K562 (cell line): ENCODE measurements at regions of chr11 and their contacts with region 1.

Region 1: DNA sequence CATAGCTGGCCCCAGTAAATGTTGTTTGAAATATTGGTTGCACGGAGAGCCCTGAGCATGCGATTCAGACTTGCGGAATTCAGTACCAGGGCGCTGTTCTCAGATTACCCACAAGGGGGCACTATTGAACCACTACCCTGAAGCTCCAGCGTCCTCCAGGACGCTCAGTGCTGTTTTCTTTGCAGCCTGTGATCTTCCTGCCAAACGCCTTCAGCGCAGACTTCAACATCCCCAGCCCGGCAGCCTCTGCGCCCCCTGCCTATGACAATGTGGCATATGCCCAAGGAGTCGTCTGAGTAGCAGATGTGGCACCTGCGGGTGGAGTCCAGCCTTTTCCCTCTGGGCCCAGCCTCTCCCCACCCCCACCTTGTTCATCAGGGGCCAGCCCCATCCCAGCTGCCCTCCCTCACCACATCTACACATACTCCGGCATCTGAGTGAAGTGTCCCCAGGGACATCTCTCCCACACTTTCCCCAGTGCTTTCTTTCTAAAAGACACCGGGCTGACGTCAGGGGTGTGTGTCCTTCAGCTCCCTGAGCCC is 9.6 kb upstream of the MS4A10 start:
- DNase-seq: peak; percentile 75 to 86 (median 78)
- ATAC-seq: peak; percentile 95
- H3K4me3 ChIP-seq: no peak overlapping the region
- H3K27ac ChIP-seq: no peak overlapping the region
- H3K4me1 ChIP-seq: peaks cover 0 to 10% of the 10 kb centered on the region in 2 experiments; a peak in 1 of 5 replicates
- H3K27me3 ChIP-seq: peaks cover 15 to 40% of the 10 kb centered on the region in 2 experiments; a peak in 4 of 5 replicates
- CTCF ChIP-seq: peak; percentile 87 to 94 (median 90)
- EP300 ChIP-seq: no peak
- POLR2A ChIP-seq: no peak
- RAD21 ChIP-seq: peak; percentile 83 to 86

Region 2: GRCh38 chr11:60887556-60887955 is 112.1 kb after region 1 on chr11:
- CTCF ChIA-PET with region 1: interaction called, 3 read pairs
- POLR2A ChIA-PET with region 1: interaction called, 4 read pairs
- in situ Hi-C with region 1: no loop called
- intact Hi-C with region 1: loop called (anchors 1 kb)
- DNase-seq: peak; percentile 66 to 75 (median 74)
- ATAC-seq: peak; percentile 89
- H3K4me3 ChIP-seq: no peak overlapping the region
- H3K27ac ChIP-seq: no peak overlapping the region
- H3K4me1 ChIP-seq: peaks cover 7 to 30% of the 10 kb centered on the region in 2 experiments
- H3K27me3 ChIP-seq: no peaks in the 10 kb centered on the region
- CTCF ChIP-seq: peak; percentile 85 to 96 (median 91)
- EP300 ChIP-seq: no peak
- POLR2A ChIP-seq: no peak
- RAD21 ChIP-seq: peak; percentile 93 to 98

Region 3: DNA sequence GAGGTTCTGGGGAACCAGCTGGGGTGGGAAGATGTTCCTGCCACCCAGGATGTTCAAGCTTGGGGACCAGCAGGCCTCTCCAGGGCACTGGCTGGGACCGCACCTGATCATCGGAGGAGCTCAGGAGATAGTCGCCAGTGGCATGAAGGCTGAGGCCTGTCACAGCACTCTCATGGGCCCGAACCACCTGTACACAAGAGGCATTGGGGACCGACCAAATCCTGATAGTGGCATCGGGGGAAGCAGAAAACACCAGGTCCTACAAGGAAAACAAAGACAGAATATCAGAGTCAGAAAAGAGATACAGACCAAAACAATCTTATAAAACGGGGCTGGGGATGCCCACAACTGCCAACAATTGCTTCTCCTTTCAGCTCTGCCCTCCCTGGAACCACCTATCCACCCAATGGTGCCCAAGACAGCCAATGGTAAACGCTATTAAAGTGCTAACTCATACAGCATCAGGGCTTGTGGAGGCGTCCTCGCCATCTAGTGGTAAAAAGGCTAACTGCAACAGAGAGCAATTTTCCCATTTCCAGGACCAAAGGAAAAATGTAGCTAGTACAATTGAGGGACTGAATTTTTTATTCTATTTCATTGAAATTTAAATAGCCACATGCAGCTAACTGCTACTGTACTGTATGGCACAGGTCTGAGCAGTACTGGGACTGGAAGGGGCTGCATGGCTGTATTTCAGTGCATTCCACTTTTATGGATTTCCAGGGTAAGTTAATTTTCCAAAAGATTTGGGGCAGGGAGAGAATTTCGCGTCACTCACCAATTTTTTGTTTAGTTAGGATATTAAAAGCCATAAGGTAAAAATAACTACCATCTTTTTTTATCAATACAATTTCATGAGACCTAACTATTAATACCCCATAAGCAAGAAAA is 123.8 kb after region 1 on chr11:
- CTCF ChIA-PET with region 1: interaction called, 4 read pairs
- POLR2A ChIA-PET with region 1: no interaction called
- in situ Hi-C with region 1: loop called (anchors 5 kb)
- intact Hi-C with region 1: no loop called
- DNase-seq: peak; percentile 53 to 74 (median 60)
- ATAC-seq: peak; percentile 93
- H3K4me3 ChIP-seq: no peak overlapping the region
- H3K27ac ChIP-seq: peak overlapping the region; percentile 35; the same call in 2 of the 3 replicates
- H3K4me1 ChIP-seq: peaks cover 0 to 4% of the 10 kb centered on the region in 2 experiments; a peak in 1 of 5 replicates
- H3K27me3 ChIP-seq: no peaks in the 10 kb centered on the region
- CTCF ChIP-seq: peak; percentile 82 to 94 (median 94)
- EP300 ChIP-seq: no peak
- POLR2A ChIP-seq: no peak
- RAD21 ChIP-seq: peak; percentile 71 to 83